ENCODE measurements at regions of chr20 and their contacts with region 1.

Region 1: DNA sequence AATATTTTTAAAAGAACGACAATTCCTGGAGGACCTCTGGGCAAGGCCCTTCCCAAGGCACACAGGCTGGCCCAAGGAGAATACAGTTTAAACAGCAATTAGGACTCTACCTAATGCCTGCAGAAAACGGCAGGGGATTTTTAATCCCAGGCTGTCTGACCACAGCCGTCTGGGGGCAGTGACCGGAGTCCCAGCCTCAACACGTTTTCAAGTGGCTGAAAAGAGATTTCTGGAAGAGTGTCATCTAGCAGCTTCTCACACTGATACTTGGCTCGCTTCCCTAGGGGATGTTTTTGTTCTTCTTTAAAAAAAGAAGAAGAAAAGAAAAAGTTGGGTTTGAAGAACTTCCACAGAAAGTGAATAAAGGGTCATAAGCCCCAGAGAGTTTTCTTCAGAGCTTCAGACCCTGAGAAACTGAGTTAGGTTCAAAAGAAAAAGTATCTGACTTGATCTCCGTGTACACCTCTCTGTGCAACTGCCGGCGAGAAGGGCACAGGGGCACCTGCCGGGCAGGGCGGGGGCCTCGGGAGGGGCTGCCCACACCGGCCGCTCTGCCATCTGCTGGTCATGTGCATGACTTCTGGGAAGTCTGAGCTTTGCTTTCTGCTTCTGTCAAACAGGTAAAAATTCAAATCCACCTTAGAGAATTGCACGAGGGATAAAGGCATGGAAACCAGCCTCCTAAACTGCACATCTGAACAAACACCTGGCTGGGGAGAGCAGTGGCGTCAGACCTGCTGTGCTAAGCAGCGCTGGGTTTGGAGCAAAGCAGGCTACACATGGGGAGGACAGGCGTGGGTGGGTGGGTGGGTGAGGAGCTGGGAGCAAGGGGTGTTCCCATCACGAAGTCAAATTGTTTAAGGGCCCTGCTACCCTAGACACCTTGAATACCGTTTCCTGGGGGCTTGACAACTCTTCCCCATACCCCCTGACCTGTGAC is 33.0 kb downstream of the RRBP1 start:
- DNase-seq: no peak
- H3K4me3 ChIP-seq: no peak overlapping the region
- H3K27ac ChIP-seq: no peak overlapping the region
- H3K27me3 ChIP-seq: no peaks in the 10 kb centered on the region
- CTCF ChIP-seq: peak; percentile 35

Region 2: GRCh38 chr20:17898548-17898994 is 249.5 kb after region 1 on chr20:
- CTCF ChIA-PET with region 1: interaction called, 18 read pairs
- POLR2A ChIA-PET with region 1: no interaction called
- DNase-seq: peak; percentile 44
- H3K4me3 ChIP-seq: no peak overlapping the region
- H3K27ac ChIP-seq: no peak overlapping the region
- H3K27me3 ChIP-seq: no peaks in the 10 kb centered on the region
- CTCF ChIP-seq: peak; percentile 98